Thyroid gland (tissue), 4 donors: ENCODE measurements at regions of chr20 and their contacts with region 1.

Region 1: DNA sequence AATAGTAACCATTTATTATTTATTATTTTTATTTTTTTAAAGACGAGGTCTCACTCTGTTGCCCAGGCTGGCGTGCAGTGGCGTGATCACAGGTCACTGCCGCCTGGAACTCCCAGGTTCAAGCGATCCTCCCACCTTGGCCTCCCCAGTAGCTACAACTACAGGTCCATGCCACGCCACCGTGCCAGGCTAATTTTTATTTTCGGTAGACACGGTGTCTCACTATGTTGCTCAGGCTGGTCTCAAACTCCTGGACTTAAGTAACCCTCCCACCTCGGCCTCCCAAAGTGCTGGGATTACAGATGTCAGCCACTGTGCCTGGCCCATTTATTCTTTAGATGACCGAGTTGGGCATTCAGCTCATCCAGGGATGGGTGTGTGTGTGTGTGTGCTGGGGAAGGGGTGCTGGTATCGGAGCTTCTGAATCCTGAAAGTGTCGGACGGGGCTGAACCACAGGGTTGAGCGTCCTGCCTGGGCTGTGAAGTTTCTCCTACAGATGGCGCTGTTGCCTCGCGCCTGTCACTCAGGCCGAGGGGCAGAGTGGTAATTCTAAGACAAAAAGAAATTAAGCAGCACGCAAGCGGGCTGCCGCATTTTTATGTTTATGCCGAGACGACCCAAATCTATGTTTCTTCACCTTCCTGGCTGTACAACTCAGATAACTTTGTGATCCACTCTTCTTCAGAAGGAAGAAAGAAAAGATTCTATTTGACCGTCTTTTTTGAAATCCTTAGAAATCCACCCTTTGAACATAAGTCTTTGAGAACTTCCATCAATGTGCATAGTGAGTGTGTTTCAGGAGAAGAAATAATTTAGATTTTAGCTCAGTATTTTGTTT is 252.8 kb downstream of the CDH26 start:
- DNase-seq: peak; percentile 73 to 79
- H3K4me3 ChIP-seq: no peak overlapping the region
- H3K27ac ChIP-seq: no peak overlapping the region
- H3K4me1 ChIP-seq: peaks cover 0 to 7% of the 10 kb centered on the region in 2 donors
- H3K27me3 ChIP-seq: no peaks in the 10 kb centered on the region
- CTCF ChIP-seq: peak; percentile 62 to 93 (median 90)
- POLR2A ChIP-seq: no peak

Region 2: GRCh38 chr20:60653111-60653845 is 442.3 kb after region 1 on chr20:
- intact Hi-C with region 1: no loop called
- DNase-seq: no peak
- H3K4me3 ChIP-seq: no peak overlapping the region
- H3K27ac ChIP-seq: no peak overlapping the region
- H3K4me1 ChIP-seq: no peaks in the 10 kb centered on the region
- H3K27me3 ChIP-seq: no peaks in the 10 kb centered on the region
- CTCF ChIP-seq: no peak
- POLR2A ChIP-seq: no peak

Region 3: GRCh38 chr20:61220160-61220559 is 1009.2 kb after region 1 on chr20:
- intact Hi-C with region 1: loop called (anchors 10 kb)
- DNase-seq: no peak
- H3K4me3 ChIP-seq: no peak overlapping the region
- H3K27ac ChIP-seq: no peak overlapping the region
- H3K4me1 ChIP-seq: no peaks in the 10 kb centered on the region
- H3K27me3 ChIP-seq: no peaks in the 10 kb centered on the region
- CTCF ChIP-seq: no peak
- POLR2A ChIP-seq: no peak